ENCODE measurements at regions of chr6 and their contacts with region 1.

Region 1: DNA sequence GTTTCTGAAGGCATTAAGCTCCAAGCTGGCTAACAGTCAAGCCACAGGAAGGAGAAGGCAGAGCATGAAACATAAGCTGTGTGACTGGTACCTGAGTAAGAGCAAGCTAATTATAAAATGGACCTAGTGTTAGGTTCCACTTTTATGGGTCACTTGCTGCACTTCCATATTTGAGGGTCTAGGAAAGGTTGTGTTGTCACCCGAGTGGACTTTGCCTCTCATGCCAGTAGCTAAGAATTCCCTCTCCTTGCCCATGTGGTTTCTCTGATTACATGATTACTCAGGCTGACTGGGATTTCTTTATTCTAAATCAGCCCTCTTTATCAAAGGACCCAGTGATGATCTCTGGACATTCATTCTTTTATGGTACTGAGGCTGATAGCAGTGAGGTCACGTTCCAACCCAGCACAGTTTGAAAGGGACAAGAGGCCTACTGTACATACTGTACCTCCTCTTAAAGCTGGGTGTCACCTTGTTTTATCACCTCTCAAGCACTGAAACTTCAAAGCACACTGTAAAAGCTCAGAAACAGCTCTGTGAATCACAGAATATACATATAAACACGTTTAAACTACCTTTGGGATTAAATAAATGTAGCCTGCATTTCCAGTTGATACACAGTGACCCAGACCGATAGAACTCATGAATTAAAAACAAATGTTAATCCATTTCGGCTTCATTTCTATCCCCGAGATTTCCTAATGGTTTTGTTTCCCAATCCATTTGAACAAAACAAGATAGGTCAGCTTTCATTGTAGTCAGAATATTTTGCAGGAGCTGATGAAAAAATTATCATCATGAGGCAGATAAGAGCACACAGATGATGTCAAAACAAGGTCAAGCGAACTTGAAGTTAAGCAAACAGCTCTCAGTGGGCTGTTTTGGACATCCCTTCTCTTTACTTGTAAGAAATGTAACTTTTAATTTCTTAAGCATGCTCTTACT is 96.5 kb downstream of the ALDH8A1 start:
- DNase-seq: no peak
- H3K4me3 ChIP-seq: no peak overlapping the region
- H3K27ac ChIP-seq: no peak overlapping the region
- H3K4me1 ChIP-seq: no peaks in the 10 kb centered on the region
- H3K27me3 ChIP-seq: no peaks in the 10 kb centered on the region
- CTCF ChIP-seq: no peak

Region 2: DNA sequence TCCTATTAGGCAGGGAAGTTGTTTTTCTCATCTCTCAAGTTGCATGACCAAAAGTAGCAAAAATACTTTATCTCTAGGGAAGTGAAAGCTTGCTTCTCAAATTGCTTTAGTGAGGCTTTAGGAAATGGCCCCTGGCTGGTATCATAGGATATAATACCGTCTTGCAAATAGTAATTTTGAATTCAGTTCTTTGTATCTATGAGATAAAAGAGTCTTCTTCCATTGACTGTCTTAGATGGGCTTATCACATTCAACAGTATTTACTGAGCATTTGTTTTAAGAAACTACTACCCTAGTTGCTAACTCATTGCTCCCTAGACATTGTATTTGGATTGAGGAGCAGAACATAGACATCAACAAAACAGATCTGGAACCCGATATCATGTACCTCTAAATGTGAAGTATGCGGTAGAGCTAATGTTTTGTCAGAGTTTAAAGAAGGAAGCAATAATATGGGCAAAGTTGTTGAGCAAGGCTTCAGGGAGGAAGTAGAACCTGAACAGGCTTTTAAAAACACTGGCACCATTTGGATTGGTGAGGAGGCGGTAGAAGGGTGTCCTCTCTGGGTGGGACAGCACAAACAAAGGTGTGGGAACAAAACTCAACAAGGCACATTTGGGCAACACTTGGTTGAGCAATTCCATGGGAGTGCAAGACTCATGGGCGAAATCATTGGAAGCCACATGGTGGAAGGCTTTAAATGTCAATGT is 636.9 kb before region 1 on chr6:
- CTCF ChIA-PET with region 1: no interaction called
- POLR2A ChIA-PET with region 1: no interaction called
- intact Hi-C with region 1: no loop called
- DNase-seq: no peak
- H3K4me3 ChIP-seq: no peak overlapping the region
- H3K27ac ChIP-seq: no peak overlapping the region
- H3K4me1 ChIP-seq: no peaks in the 10 kb centered on the region
- H3K27me3 ChIP-seq: no peaks in the 10 kb centered on the region
- CTCF ChIP-seq: no peak

Region 3: DNA sequence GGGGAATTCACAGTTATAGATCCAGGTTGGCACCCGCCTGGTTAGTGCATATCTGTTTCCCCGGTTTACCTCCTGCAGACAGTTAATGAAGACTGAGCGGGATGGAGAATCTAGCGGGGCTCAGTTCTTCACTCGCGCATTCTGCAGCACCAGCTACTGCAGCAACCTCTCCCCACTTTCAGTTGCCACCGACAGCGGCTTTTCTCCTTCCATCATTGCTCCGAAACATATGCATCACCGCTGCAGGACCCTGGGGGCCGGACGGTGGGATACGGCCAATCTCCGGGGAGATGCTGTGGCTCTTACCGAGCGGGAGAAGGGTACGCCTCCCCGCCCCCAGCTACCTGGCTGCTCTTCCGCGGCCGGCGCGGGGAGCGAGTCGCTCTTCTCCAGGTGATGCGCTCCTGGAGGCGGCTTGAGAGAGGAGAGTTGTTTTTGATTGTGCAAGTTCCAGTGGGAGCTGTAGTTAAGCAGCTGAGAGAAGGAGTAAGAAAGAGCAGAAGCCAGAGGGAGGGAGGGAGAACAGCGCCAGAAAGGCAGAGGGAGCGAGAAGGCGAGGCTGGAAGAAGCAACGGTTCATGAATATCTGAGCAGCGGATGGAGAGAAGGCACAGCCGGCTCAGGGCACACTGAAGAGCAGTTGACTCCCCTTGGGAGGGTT is 535.8 kb before region 1 on chr6 and contains the start of gene SGK1:
- CTCF ChIA-PET with region 1: interaction called, 12 read pairs
- POLR2A ChIA-PET with region 1: no interaction called
- intact Hi-C with region 1: no loop called
- DNase-seq: peak; percentile 35
- H3K4me3 ChIP-seq: peak within 1 kb of the TSS; percentile 55
- H3K27ac ChIP-seq: no peak within 1 kb of the TSS
- H3K4me1 ChIP-seq: peaks cover 6% of the 10 kb centered on the region
- H3K27me3 ChIP-seq: peaks cover 3% of the 10 kb centered on the region
- CTCF ChIP-seq: no peak
- total RNA-seq, gene SGK1: 40.0 and 73.3 TPM in 2 replicates

Region 4: DNA sequence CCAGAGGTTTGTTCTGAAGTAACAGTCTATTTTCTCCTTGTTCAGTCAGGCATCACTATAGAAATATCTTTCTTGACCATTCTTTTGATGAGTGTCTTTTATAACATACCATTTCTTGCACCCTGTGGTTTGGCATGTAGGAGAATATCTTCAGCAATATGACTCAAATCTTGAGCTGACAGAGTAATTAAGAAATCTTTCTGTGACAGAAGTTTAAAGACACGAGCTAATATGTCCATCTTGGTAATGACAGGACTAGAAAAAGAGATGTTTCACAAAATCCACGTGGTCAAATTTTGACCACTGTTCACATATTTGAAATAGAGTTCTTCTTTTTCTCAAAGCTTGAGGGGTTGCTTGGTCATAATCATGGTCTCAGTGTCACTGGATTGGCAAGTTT is 477.6 kb after region 1 on chr6:
- CTCF ChIA-PET with region 1: interaction called, 12 read pairs
- POLR2A ChIA-PET with region 1: no interaction called
- intact Hi-C with region 1: no loop called
- DNase-seq: no peak
- H3K4me3 ChIP-seq: no peak overlapping the region
- H3K27ac ChIP-seq: no peak overlapping the region
- H3K4me1 ChIP-seq: no peaks in the 10 kb centered on the region
- H3K27me3 ChIP-seq: no peaks in the 10 kb centered on the region
- CTCF ChIP-seq: no peak